Ovary (tissue), 10 donors: ENCODE measurements at regions of chr15 and their contacts with region 1.

Region 1: GRCh38 chr15:45166834-45167630 is 20.7 kb downstream of the SHF start:
- DNase-seq: peak; percentile 89 to 93 (median 90)
- H3K4me3 ChIP-seq: peak overlapping the region; percentile 46
- H3K27ac ChIP-seq: peak overlapping the region; percentile 97 to 99
- H3K4me1 ChIP-seq: peaks cover 1% of the 10 kb centered on the region
- H3K27me3 ChIP-seq: no peaks in the 10 kb centered on the region
- CTCF ChIP-seq: peak; percentile 56 to 71 (median 68)
- EP300 ChIP-seq: no peak
- POLR2A ChIP-seq: peak; percentile 30

Region 2: DNA sequence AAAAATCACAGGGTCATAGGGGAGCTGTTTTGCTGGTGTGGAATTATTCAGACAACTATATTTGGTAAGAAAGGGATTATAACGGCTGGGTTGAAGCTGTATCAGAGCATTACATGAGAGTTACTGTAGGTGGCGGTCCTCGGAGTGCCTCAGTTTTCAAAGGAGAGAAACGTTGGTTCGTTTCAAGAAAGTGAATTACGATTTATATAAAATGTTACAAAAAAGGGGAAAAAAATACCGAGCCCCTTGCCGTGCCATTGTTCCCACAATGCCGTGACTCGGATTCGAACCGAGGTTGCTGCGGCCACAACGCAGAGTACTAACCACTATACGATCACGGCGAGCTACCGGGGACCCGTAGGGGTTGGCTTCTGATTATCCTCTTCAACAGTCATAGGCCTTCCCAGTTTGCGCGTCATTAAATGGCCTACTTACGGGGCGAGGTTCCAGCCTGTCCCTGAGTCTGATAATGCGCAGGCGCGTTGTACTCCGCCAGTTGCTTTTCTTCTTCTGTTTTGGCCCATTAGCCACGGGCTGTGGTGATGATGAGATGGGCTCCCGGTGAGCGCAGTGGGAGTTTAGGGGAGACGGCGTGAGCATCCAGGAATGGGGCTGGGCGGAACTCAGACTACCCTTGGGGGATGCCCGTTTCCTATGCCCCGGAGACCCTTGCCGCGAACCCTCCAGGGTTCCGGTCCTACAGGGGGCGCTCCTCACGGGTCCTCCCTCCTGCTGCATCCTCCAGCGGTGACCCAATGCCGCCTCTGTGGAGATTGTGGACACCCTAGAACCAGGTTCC is 31.5 kb after region 1 on chr15:
- intact Hi-C with region 1: loop called in 2 of 4 experiments (anchors 2 to 5 kb)
- DNase-seq: peak; percentile 94 to 98 (median 96)
- H3K4me3 ChIP-seq: peak overlapping the region; percentile 73
- H3K27ac ChIP-seq: peak overlapping the region; percentile 80 to 97
- H3K4me1 ChIP-seq: no peaks in the 10 kb centered on the region
- H3K27me3 ChIP-seq: no peaks in the 10 kb centered on the region
- CTCF ChIP-seq: peak; percentile 44 to 86 (median 82)
- EP300 ChIP-seq: no peak
- POLR2A ChIP-seq: peak; percentile 98

Region 3: DNA sequence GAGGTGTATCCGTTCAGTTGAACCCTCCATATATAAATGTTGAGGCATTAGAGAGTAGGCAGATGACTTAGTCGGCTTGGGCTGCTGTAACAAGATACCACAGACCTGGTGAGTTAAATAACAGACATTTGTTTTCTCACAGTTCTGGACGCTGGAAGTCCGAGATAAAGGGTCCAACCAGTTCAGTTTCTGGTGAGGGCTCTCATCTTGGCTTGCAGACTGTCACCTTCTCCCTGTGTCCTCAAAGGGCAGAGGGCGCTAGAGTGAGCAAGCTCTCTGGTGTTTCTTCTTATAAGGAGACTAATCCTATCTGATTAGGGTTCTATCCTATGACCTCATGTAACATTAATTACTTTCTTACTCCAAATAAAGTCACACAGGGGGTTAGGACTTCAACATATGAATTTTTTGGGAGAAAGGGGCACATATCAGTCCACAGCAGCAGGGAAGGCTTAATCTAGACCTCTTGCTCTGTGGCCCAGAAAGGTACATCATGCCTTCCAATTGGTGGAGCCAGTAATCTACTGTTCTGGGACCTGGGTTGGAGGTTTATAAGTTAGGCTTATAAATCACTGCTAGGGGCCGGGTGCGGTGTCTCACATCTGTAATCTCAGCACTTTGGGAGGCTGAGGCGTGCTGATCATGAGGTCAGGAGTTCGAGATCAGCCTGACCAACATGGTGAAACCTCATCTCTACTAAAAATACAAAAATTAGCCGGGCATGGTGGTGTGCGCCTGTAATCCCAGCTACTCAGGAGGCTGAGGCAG is 58.7 kb after region 1 on chr15:
- intact Hi-C with region 1: no loop called
- DNase-seq: no peak
- H3K4me3 ChIP-seq: no peak overlapping the region
- H3K27ac ChIP-seq: no peak overlapping the region
- H3K4me1 ChIP-seq: no peaks in the 10 kb centered on the region
- H3K27me3 ChIP-seq: no peaks in the 10 kb centered on the region
- CTCF ChIP-seq: no peak
- EP300 ChIP-seq: no peak
- POLR2A ChIP-seq: no peak

Region 4: DNA sequence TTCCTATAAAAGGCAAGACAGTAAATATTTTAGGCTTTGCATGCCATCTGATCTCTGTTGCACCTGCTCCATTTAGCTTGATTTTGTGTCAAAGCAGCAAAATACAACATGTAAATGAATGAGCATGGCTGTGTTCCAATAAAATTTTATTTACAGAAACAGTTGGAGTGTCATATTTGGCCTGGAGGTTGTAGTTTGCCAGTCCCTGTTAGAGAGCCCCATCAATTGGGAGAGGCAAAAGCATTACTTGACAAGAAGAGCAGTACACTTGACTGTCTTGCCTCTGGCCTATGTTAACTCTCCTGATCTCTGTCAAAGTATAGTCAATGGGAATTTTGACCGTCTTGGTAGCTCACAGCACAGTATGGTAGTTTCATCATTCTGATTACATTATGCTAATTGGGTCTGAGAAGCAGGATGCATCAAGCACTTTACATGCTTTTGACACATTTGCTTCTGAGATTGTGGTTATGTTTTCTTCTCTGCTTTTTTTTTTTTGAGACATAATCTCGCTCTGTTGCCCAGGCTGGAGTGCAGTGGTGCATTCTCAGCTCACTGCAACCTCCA is 120.4 kb after region 1 on chr15:
- intact Hi-C with region 1: loop called in 1 of 4 experiments (anchors 10 kb)
- DNase-seq: no peak
- H3K4me3 ChIP-seq: no peak overlapping the region
- H3K27ac ChIP-seq: no peak overlapping the region
- H3K4me1 ChIP-seq: no peaks in the 10 kb centered on the region
- H3K27me3 ChIP-seq: no peaks in the 10 kb centered on the region
- CTCF ChIP-seq: no peak
- EP300 ChIP-seq: no peak
- POLR2A ChIP-seq: no peak

Region 5: GRCh38 chr15:45331972-45332371 is 164.9 kb after region 1 on chr15:
- intact Hi-C with region 1: no loop called
- DNase-seq: no peak
- H3K4me3 ChIP-seq: no peak overlapping the region
- H3K27ac ChIP-seq: peak overlapping the region in 1 of 2 donors; percentile 42
- H3K4me1 ChIP-seq: peaks cover 7% of the 10 kb centered on the region
- H3K27me3 ChIP-seq: no peaks in the 10 kb centered on the region
- CTCF ChIP-seq: no peak
- EP300 ChIP-seq: no peak
- POLR2A ChIP-seq: no peak

Region 6: GRCh38 chr15:45378149-45378912 is 211.3 kb after region 1 on chr15 and contains the start of gene GATM:
- intact Hi-C with region 1: loop called in 1 of 4 experiments (anchors 5 kb)
- DNase-seq: peak; percentile 80 to 88 (median 85)
- H3K4me3 ChIP-seq: peak within 1 kb of the TSS; percentile 56
- H3K27ac ChIP-seq: peak within 1 kb of the TSS; percentile 45 to 78
- H3K4me1 ChIP-seq: peaks cover 3% of the 10 kb centered on the region
- H3K27me3 ChIP-seq: no peaks in the 10 kb centered on the region
- CTCF ChIP-seq: peak in 2 of 3 donors; percentile 40 to 69
- EP300 ChIP-seq: no peak
- POLR2A ChIP-seq: peak; percentile 72
- total RNA-seq, gene GATM: 43.6 to 218 (median 160) TPM

Region 7: DNA sequence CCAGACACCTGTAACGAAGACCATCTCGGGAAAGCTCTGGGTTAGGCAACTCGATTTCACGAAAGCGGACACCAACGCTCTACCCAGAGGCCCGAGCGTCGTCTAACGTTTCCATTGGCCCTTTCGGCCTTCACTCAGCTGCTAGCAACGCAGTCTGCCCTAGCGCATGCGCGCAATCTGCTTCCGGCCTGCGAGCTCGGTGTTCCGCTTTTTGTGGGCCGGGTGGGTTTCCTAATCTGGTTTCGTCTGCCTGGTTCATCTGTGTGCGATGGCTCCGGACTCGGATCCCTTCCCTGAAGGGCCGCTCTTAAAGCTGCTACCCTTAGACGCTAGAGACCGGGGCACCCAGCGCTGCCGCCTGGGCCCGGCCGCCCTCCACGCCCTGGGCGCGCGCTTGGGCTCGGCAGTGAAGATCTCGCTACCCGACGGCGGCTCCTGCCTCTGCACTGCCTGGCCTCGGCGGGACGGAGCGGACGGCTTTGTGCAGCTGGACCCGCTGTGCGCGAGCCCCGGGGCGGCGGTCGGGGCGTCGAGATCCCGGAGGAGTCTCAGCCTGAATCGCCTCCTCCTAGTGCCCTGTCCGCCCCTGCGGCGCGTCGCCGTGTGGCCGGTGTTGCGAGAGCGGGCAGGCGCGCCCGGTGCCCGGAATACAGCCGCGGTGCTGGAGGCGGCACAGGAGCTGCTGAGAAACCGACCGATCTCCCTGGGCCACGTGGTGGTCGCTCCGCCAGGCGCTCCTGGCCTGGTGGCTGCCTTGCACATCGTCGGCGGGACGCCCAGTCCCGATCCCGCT is 235.3 kb after region 1 on chr15:
- intact Hi-C with region 1: loop called in 3 of 4 experiments (anchors 5 to 10 kb)
- DNase-seq: peak; percentile 94 to 98 (median 97)
- H3K4me3 ChIP-seq: peak overlapping the region; percentile 98
- H3K27ac ChIP-seq: peak overlapping the region; percentile 56 to 85
- H3K4me1 ChIP-seq: peaks cover 3% of the 10 kb centered on the region
- H3K27me3 ChIP-seq: no peaks in the 10 kb centered on the region
- CTCF ChIP-seq: no peak
- EP300 ChIP-seq: no peak
- POLR2A ChIP-seq: peak; percentile 65

Region 8: GRCh38 chr15:45457641-45458433 is 290.8 kb after region 1 on chr15:
- intact Hi-C with region 1: loop called in 2 of 4 experiments (anchors 5 to 10 kb)
- DNase-seq: peak; percentile 55 to 75 (median 57)
- H3K4me3 ChIP-seq: peak overlapping the region; percentile 39
- H3K27ac ChIP-seq: peak overlapping the region; percentile 15 to 71
- H3K4me1 ChIP-seq: no peaks in the 10 kb centered on the region
- H3K27me3 ChIP-seq: no peaks in the 10 kb centered on the region
- CTCF ChIP-seq: peak; percentile 71 to 76 (median 72)
- EP300 ChIP-seq: no peak
- POLR2A ChIP-seq: no peak